ENCODE measurements at regions of chr7 and their contacts with region 1.

Region 1: DNA sequence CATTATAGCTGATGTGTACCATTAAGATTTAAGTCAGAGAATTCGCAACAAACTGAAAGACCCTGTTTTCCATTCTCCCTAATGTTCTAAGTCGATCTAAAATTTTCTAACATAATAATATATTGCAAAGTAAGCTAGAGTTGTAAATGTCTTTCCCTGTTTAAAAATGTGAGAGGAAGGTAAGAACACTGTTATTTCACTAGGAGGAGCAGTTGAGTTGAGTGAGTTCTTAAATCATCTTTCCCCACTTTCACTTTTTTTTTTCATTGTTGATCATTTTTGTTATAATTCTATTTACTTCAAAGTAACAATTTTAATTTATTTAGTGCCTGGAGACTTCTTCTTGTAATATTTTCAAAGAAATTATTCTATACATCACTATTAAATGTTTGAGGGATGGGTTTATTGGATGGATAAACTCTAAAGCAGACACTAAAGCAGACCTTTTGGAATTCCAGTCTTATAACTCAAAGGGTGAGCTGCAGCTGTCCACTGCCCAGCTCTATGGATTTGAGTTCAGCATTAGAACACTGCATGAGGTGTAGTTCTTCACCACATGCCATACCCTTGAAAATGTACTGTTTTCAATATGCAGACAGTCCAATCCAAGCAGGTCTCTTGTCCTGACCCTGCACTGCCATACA is 181.3 kb upstream of the FZD1 start:
- DNase-seq: peak in 4 of 9 donors; percentile 39 to 55 (median 44)
- ATAC-seq: peak; percentile 47
- H3K4me3 ChIP-seq: no peak overlapping the region
- H3K4me3 Mint-ChIP-seq: peak overlapping the region in 9 of 10 donors; percentile 56 to 83 (median 68)
- H3K27ac ChIP-seq: no peak overlapping the region
- H3K27ac Mint-ChIP-seq: peak overlapping the region in 8 of 9 donors; percentile 71 to 96 (median 90)
- H3K4me1 ChIP-seq: peaks cover 0 to 27% of the 10 kb centered on the region in 2 donors
- H3K4me1 Mint-ChIP-seq: peaks cover 18 to 48% (median 39%) of the 10 kb centered on the region in 7 donors
- H3K27me3 ChIP-seq: no peaks in the 10 kb centered on the region
- H3K27me3 Mint-ChIP-seq: peaks cover 0 to 2% (median 0%) of the 10 kb centered on the region in 5 donors

Region 2: GRCh38 chr7:90455163-90456030 is 627.6 kb before region 1 on chr7:
- CTCF ChIA-PET with region 1: no interaction called
- POLR2A ChIA-PET with region 1: no interaction called
- intact Hi-C with region 1: loop called in 1 of 2 experiments (anchors 2 kb)
- DNase-seq: peak in 5 of 9 donors; percentile 32 to 49 (median 40)
- ATAC-seq: peak; percentile 77
- H3K4me3 ChIP-seq: no peak overlapping the region
- H3K4me3 Mint-ChIP-seq: peak overlapping the region in 7 of 10 donors; percentile 37 to 70 (median 56)
- H3K27ac ChIP-seq: no peak overlapping the region
- H3K27ac Mint-ChIP-seq: no peak overlapping the region
- H3K4me1 ChIP-seq: no peaks in the 10 kb centered on the region
- H3K4me1 Mint-ChIP-seq: peaks cover 5 to 8% (median 6%) of the 10 kb centered on the region in 7 donors
- H3K27me3 ChIP-seq: no peaks in the 10 kb centered on the region
- H3K27me3 Mint-ChIP-seq: peaks cover 0 to 22% (median 10%) of the 10 kb centered on the region in 5 donors

Region 3: GRCh38 chr7:91064938-91065337 is 18.0 kb before region 1 on chr7:
- CTCF ChIA-PET with region 1: no interaction called
- POLR2A ChIA-PET with region 1: no interaction called
- intact Hi-C with region 1: no loop called
- DNase-seq: no peak
- ATAC-seq: no peak
- H3K4me3 ChIP-seq: no peak overlapping the region
- H3K4me3 Mint-ChIP-seq: no peak overlapping the region
- H3K27ac ChIP-seq: no peak overlapping the region
- H3K27ac Mint-ChIP-seq: no peak overlapping the region
- H3K4me1 ChIP-seq: no peaks in the 10 kb centered on the region
- H3K4me1 Mint-ChIP-seq: no peaks in the 10 kb centered on the region
- H3K27me3 ChIP-seq: no peaks in the 10 kb centered on the region
- H3K27me3 Mint-ChIP-seq: no peaks in the 10 kb centered on the region

Region 4: GRCh38 chr7:91103355-91103754 is 20.4 kb after region 1 on chr7:
- CTCF ChIA-PET with region 1: no interaction called
- POLR2A ChIA-PET with region 1: no interaction called
- intact Hi-C with region 1: no loop called
- DNase-seq: no peak
- ATAC-seq: no peak
- H3K4me3 ChIP-seq: no peak overlapping the region
- H3K4me3 Mint-ChIP-seq: no peak overlapping the region
- H3K27ac ChIP-seq: no peak overlapping the region
- H3K27ac Mint-ChIP-seq: no peak overlapping the region
- H3K4me1 ChIP-seq: no peaks in the 10 kb centered on the region
- H3K4me1 Mint-ChIP-seq: peaks cover 0 to 9% (median 6%) of the 10 kb centered on the region in 7 donors
- H3K27me3 ChIP-seq: peaks cover 0 to 2% of the 10 kb centered on the region in 2 donors
- H3K27me3 Mint-ChIP-seq: peaks cover 0 to 3% (median 0%) of the 10 kb centered on the region in 5 donors

Region 5: DNA sequence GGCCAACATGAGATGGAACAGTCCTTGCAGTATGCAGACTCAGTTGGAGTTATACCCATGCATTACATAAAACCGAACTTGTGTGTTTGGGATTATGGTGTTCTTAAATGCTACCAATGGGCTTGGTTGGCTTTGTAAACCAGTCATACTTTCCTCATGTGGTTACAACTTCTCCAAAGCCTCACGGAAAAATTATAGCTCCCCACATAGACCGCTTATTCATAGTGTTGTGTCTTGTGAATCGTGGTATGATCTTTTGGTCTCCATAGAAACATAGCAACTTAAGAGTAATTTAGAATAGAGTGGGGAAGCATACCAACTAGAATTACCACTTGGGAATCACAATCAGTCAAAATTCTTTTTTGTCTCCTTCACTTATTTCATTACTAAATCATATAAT is 68.9 kb after region 1 on chr7:
- CTCF ChIA-PET with region 1: no interaction called
- POLR2A ChIA-PET with region 1: no interaction called
- intact Hi-C with region 1: no loop called
- DNase-seq: no peak
- ATAC-seq: no peak
- H3K4me3 ChIP-seq: no peak overlapping the region
- H3K4me3 Mint-ChIP-seq: no peak overlapping the region
- H3K27ac ChIP-seq: no peak overlapping the region
- H3K27ac Mint-ChIP-seq: no peak overlapping the region
- H3K4me1 ChIP-seq: no peaks in the 10 kb centered on the region
- H3K4me1 Mint-ChIP-seq: no peaks in the 10 kb centered on the region
- H3K27me3 ChIP-seq: no peaks in the 10 kb centered on the region
- H3K27me3 Mint-ChIP-seq: peaks cover 0 to 4% (median 0%) of the 10 kb centered on the region in 5 donors

Region 6: DNA sequence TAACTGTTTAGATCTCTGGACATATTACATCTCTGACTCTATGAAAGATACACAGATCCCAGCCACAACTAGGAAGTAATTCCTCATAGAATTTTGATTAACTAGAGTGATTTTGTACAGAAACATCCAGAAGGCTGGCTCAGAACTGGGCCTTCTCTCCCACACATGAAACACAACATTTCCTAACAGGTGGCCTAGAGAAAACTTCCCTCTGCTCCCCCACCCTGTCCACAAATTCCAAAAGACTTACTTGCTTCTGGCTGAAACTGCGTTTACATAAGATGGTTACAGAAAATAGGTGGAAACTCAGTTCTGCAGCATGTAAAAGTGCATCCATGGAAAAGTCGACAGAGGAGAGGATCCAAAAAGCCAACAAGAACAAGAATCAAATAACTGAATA is 314.1 kb after region 1 on chr7:
- CTCF ChIA-PET with region 1: no interaction called
- POLR2A ChIA-PET with region 1: no interaction called
- intact Hi-C with region 1: no loop called
- DNase-seq: no peak
- ATAC-seq: no peak
- H3K4me3 ChIP-seq: no peak overlapping the region
- H3K4me3 Mint-ChIP-seq: no peak overlapping the region
- H3K27ac ChIP-seq: no peak overlapping the region
- H3K27ac Mint-ChIP-seq: no peak overlapping the region
- H3K4me1 ChIP-seq: no peaks in the 10 kb centered on the region
- H3K4me1 Mint-ChIP-seq: no peaks in the 10 kb centered on the region
- H3K27me3 ChIP-seq: no peaks in the 10 kb centered on the region
- H3K27me3 Mint-ChIP-seq: peaks cover 0 to 22% (median 3%) of the 10 kb centered on the region in 5 donors

Region 7: GRCh38 chr7:91636129-91636724 is 553.3 kb after region 1 on chr7:
- CTCF ChIA-PET with region 1: no interaction called
- POLR2A ChIA-PET with region 1: no interaction called
- intact Hi-C with region 1: loop called (anchors 1 to 5 kb)
- DNase-seq: peak in 3 of 9 donors; percentile 6 to 19 (median 16)
- ATAC-seq: peak; percentile 16
- H3K4me3 ChIP-seq: no peak overlapping the region
- H3K4me3 Mint-ChIP-seq: no peak overlapping the region
- H3K27ac ChIP-seq: no peak overlapping the region
- H3K27ac Mint-ChIP-seq: no peak overlapping the region
- H3K4me1 ChIP-seq: no peaks in the 10 kb centered on the region
- H3K4me1 Mint-ChIP-seq: peaks cover 0 to 2% (median 0%) of the 10 kb centered on the region in 7 donors
- H3K27me3 ChIP-seq: no peaks in the 10 kb centered on the region
- H3K27me3 Mint-ChIP-seq: no peaks in the 10 kb centered on the region

Region 8: GRCh38 chr7:91784463-91784862 is 701.5 kb after region 1 on chr7:
- CTCF ChIA-PET with region 1: interaction called, 3 read pairs
- POLR2A ChIA-PET with region 1: no interaction called
- intact Hi-C with region 1: loop called (anchors 1 to 10 kb)
- DNase-seq: no peak
- ATAC-seq: no peak
- H3K4me3 ChIP-seq: no peak overlapping the region
- H3K4me3 Mint-ChIP-seq: no peak overlapping the region
- H3K27ac ChIP-seq: no peak overlapping the region
- H3K27ac Mint-ChIP-seq: no peak overlapping the region
- H3K4me1 ChIP-seq: no peaks in the 10 kb centered on the region
- H3K4me1 Mint-ChIP-seq: no peaks in the 10 kb centered on the region
- H3K27me3 ChIP-seq: no peaks in the 10 kb centered on the region
- H3K27me3 Mint-ChIP-seq: peaks cover 0 to 8% (median under 1%) of the 10 kb centered on the region in 5 donors

Region 9: GRCh38 chr7:92461027-92462003 is 1378.3 kb after region 1 on chr7:
- CTCF ChIA-PET with region 1: no interaction called
- POLR2A ChIA-PET with region 1: no interaction called
- intact Hi-C with region 1: loop called (anchors 5 kb)
- DNase-seq: peak in 6 of 9 donors; percentile 3 to 38 (median 24)
- ATAC-seq: peak; percentile 72
- H3K4me3 ChIP-seq: no peak overlapping the region
- H3K4me3 Mint-ChIP-seq: no peak overlapping the region
- H3K27ac ChIP-seq: no peak overlapping the region
- H3K27ac Mint-ChIP-seq: peak overlapping the region in 3 of 9 donors; percentile 16 to 46 (median 45)
- H3K4me1 ChIP-seq: no peaks in the 10 kb centered on the region
- H3K4me1 Mint-ChIP-seq: peaks cover 0 to 2% (median 0%) of the 10 kb centered on the region in 7 donors
- H3K27me3 ChIP-seq: no peaks in the 10 kb centered on the region
- H3K27me3 Mint-ChIP-seq: no peaks in the 10 kb centered on the region